Activated CD4-positive, alpha-beta memory T cell treated with anti-CD3 and anti-CD28 coated beads for 36 hours (primary cell): ENCODE measurements at regions of chr17 and their contacts with region 1.

Region 1: GRCh38 chr17:35242805-35243560 is at the start of gene SLFN5:
- DNase-seq: peak; percentile 96
- H3K4me3 Mint-ChIP-seq: peak within 1 kb of the TSS; percentile 96
- H3K27ac Mint-ChIP-seq: peak within 1 kb of the TSS; percentile 99
- H3K4me1 Mint-ChIP-seq: peaks cover 68% of the 10 kb centered on the region
- H3K27me3 Mint-ChIP-seq: no peaks in the 10 kb centered on the region
- total RNA-seq, gene SLFN5: 51.2 to 52.0 TPM

Region 2: DNA sequence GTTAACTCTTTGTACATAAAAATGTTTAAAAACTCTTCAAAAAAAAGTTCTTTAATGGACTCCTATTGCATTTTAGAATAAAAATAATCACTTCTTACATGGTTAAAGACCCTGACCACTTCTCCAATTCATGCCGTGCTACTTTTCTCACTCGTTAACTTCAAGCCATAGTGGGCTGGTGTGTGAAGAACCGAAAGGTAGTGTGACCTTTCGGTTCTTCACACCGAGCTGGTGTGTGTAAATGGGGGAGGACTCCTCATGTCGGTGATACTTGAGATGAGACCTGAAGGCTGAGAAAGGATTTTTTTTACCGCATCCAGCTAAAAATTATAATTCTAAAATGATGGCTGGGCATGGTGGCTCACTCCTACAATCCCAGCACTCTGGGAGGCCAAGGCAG is 201.6 kb before region 1 on chr17:
- CTCF ChIA-PET with region 1: no interaction called
- POLR2A ChIA-PET with region 1: no interaction called
- intact Hi-C with region 1: no loop called
- DNase-seq: no peak
- H3K4me3 Mint-ChIP-seq: no peak overlapping the region
- H3K27ac Mint-ChIP-seq: no peak overlapping the region
- H3K4me1 Mint-ChIP-seq: peaks cover 46% of the 10 kb centered on the region
- H3K27me3 Mint-ChIP-seq: no peaks in the 10 kb centered on the region

Region 3: DNA sequence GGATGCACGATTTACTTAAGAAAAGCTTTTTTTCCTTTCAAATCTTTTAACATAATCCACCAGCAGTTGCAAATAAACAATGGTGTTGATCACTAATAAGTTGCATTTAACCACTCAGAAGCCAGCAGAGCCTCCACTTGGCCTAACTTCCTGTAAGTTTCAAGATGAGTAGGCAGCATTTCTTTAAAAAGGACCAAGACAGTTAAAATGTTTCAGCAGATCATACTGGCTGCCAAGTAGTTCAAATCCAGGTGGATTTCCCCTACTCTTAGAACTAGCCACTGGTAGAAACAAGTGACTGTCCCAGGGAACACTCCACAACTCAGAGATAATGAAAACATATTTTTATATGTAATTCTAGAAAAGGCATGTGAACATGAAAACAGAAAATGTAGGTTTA is 162.4 kb before region 1 on chr17:
- CTCF ChIA-PET with region 1: no interaction called
- POLR2A ChIA-PET with region 1: no interaction called
- intact Hi-C with region 1: no loop called
- DNase-seq: peak; percentile 39
- H3K4me3 Mint-ChIP-seq: peak overlapping the region; percentile 27
- H3K27ac Mint-ChIP-seq: peak overlapping the region; percentile 81
- H3K4me1 Mint-ChIP-seq: peaks cover 68% of the 10 kb centered on the region
- H3K27me3 Mint-ChIP-seq: no peaks in the 10 kb centered on the region

Region 4: DNA sequence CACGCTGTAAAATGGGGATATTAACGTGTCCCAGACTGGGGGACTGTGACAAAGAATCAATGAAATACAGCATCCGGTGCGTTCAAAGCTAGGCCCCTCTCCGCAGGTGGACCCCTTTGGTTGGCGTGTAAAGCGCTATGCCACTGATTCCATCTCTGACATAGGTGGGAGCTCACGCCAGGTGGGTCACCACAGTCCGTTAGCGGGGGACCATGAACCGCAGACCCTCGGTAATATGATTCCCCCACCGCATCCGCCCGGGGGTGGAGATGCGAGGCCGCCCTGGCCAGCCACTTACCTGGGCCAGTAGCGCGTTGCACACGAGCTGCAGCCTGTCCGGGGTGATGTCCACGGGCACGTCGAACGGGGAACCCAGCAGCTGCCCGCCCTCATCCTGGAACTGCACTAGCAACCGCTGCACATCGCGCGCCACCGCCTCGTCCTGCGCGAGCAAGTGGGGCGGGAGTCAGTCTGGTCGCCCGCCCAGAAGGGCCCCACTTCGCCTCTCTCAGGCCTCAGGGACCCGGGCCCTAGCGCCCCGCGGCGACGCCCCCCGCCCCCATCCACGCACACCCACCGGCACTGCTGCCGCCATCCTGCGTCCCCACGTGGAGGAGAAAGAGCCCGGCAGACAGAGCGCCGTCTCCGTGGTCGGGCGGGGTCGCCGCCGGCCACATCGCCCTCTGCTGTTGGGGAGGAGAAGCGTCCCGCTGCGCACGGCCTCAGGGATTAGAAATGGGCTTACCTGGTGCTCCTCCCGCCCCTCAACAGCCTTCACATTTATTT is 101.1 kb before region 1 on chr17 and contains the start of gene NLE1:
- CTCF ChIA-PET with region 1: interaction called, 4 read pairs
- POLR2A ChIA-PET with region 1: interaction called, 3 read pairs
- intact Hi-C with region 1: loop called (anchors 1 kb)
- DNase-seq: peak; percentile 93
- H3K4me3 Mint-ChIP-seq: peak within 1 kb of the TSS; percentile 79
- H3K27ac Mint-ChIP-seq: peak within 1 kb of the TSS; percentile 74
- H3K4me1 Mint-ChIP-seq: peaks cover 16% of the 10 kb centered on the region
- H3K27me3 Mint-ChIP-seq: no peaks in the 10 kb centered on the region
- total RNA-seq, gene NLE1: 29.9 to 31.4 TPM

Region 5: GRCh38 chr17:35214631-35215273 is 28.2 kb before region 1 on chr17:
- CTCF ChIA-PET with region 1: interaction called, 17 read pairs
- POLR2A ChIA-PET with region 1: interaction called, 60 read pairs
- intact Hi-C with region 1: loop called (anchors 1 kb)
- DNase-seq: peak; percentile 51
- H3K4me3 Mint-ChIP-seq: peak overlapping the region; percentile 49
- H3K27ac Mint-ChIP-seq: peak overlapping the region; percentile 91
- H3K4me1 Mint-ChIP-seq: peaks cover 82% of the 10 kb centered on the region
- H3K27me3 Mint-ChIP-seq: no peaks in the 10 kb centered on the region

Region 6: DNA sequence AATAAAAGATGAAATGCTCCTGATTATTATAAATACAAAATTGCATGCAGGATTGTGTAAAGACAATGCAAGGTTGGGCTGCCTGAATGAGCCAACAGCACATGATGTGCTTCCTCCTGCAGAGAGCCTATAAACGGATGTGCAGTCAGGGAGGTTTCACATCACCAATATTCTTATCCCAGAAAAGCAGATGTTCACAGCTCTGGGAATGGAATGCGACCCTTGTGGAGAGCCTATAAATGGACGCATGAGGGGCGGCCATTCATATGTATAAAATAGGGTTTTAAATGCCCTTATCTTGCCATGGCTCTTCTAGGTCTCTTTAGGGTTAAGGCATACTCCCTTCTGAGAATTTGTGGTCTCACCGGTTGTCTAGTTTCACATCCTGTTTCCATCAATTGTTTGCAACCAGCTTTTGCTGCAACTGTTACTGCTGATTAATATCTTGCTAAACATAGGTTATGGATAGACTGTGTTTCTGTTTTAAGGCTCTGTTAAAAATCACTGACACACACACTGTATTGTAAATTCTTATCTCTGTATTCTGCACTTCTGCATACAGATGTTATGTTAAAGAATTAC is 98.5 kb after region 1 on chr17:
- CTCF ChIA-PET with region 1: no interaction called
- POLR2A ChIA-PET with region 1: no interaction called
- intact Hi-C with region 1: no loop called
- DNase-seq: peak; percentile 26
- H3K4me3 Mint-ChIP-seq: no peak overlapping the region
- H3K27ac Mint-ChIP-seq: peak overlapping the region; percentile 47
- H3K4me1 Mint-ChIP-seq: peaks cover 32% of the 10 kb centered on the region
- H3K27me3 Mint-ChIP-seq: no peaks in the 10 kb centered on the region

Region 7: GRCh38 chr17:35373534-35373983 is 130.6 kb after region 1 on chr17 and contains the start of gene SLFN11:
- CTCF ChIA-PET with region 1: no interaction called
- POLR2A ChIA-PET with region 1: interaction called, 6 read pairs
- intact Hi-C with region 1: loop called (anchors 2 kb)
- DNase-seq: peak; percentile 94
- H3K4me3 Mint-ChIP-seq: peak within 1 kb of the TSS; percentile 96
- H3K27ac Mint-ChIP-seq: peak within 1 kb of the TSS; percentile 97
- H3K4me1 Mint-ChIP-seq: peaks cover 53% of the 10 kb centered on the region
- H3K27me3 Mint-ChIP-seq: no peaks in the 10 kb centered on the region
- total RNA-seq, gene SLFN11: 64.8 to 68.8 TPM

Region 8: GRCh38 chr17:35486920-35487732 is 244.1 kb after region 1 on chr17:
- CTCF ChIA-PET with region 1: no interaction called
- POLR2A ChIA-PET with region 1: interaction called, 5 read pairs
- intact Hi-C with region 1: loop called (anchors 1 kb)
- DNase-seq: peak; percentile 93
- H3K4me3 Mint-ChIP-seq: peak overlapping the region; percentile 80
- H3K27ac Mint-ChIP-seq: peak overlapping the region; percentile 88
- H3K4me1 Mint-ChIP-seq: peaks cover 45% of the 10 kb centered on the region
- H3K27me3 Mint-ChIP-seq: no peaks in the 10 kb centered on the region

Region 9: DNA sequence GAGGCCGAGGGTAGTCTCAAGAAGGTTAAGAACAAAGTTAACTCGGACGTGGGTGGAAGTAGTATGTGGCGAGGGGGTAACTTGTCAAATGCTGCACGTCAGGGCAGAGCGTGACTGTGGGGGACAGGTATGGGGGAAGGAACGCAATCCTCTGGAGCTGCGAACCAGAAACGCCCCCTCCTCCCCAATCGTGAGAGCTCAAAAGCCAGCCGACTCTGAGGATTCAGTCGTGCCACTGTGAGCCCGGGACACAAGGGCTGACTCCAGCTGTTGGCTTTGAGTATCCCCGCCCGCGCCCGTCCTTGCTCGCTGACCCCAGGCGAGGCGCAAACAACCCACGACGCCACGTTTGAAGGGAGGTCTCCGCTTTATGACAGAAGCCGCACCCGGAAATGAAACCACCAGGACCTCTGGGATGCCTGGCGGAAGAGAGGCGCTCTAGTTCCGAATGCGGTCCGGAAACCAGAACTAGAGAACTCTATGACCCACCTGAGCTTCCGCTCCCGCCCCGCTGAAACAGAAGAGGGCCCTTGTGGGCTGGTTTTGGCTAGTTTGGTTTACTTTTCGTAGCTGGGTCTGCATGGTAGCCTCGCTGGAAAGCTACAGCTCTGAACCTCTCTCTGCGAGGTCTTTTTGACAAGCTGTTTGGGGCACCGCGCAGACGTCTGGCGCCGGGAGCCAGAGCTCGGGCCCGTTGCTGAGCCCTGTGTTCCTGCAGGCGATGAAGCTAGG is 335.4 kb after region 1 on chr17 and contains the start of gene PEX12:
- CTCF ChIA-PET with region 1: interaction called, 3 read pairs
- POLR2A ChIA-PET with region 1: interaction called, 6 read pairs
- intact Hi-C with region 1: loop called (anchors 2 kb)
- DNase-seq: peak; percentile 92
- H3K4me3 Mint-ChIP-seq: peak within 1 kb of the TSS; percentile 94
- H3K27ac Mint-ChIP-seq: peak within 1 kb of the TSS; percentile 98
- H3K4me1 Mint-ChIP-seq: peaks cover 20% of the 10 kb centered on the region
- H3K27me3 Mint-ChIP-seq: no peaks in the 10 kb centered on the region
- total RNA-seq, gene PEX12: 4.9 to 6.0 TPM

Region 10: DNA sequence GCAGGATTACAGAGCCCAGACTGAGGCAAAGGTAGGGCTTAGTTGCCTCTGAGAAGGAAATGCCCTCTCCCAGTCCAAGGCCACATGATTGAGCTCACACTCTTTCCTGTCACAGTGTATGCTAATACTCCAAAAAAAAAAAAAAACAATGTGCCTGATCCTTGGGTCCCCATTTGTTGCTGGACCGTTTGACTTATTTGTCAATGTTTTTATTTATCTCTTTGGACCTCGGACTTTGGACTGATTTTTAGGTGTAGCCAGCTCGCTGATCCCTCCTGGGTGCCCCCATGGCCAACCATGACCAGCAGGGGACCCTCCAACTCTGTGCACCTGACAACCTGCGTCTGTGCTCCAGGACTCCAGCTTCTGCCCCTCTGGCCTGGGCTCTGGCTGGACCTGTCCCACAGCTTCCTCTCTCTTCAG is 738.9 kb after region 1 on chr17:
- CTCF ChIA-PET with region 1: no interaction called
- POLR2A ChIA-PET with region 1: no interaction called
- intact Hi-C with region 1: no loop called
- DNase-seq: peak; percentile 20
- H3K4me3 Mint-ChIP-seq: no peak overlapping the region
- H3K27ac Mint-ChIP-seq: no peak overlapping the region
- H3K4me1 Mint-ChIP-seq: no peaks in the 10 kb centered on the region
- H3K27me3 Mint-ChIP-seq: peaks cover 5% of the 10 kb centered on the region

Region 11: GRCh38 chr17:36089888-36090836 is 847.2 kb after region 1 on chr17 and contains the start of gene CCL3:
- CTCF ChIA-PET with region 1: no interaction called
- POLR2A ChIA-PET with region 1: no interaction called
- intact Hi-C with region 1: loop called (anchors 5 kb)
- DNase-seq: peak; percentile 79
- H3K4me3 Mint-ChIP-seq: peak within 1 kb of the TSS; percentile 64
- H3K27ac Mint-ChIP-seq: peak within 1 kb of the TSS; percentile 74
- H3K4me1 Mint-ChIP-seq: peaks cover 56% of the 10 kb centered on the region
- H3K27me3 Mint-ChIP-seq: peaks cover 26% of the 10 kb centered on the region
- total RNA-seq, gene CCL3: 981 to 989 TPM